ENCODE measurements at regions of chr18 and their contacts with region 1.

Region 1: DNA sequence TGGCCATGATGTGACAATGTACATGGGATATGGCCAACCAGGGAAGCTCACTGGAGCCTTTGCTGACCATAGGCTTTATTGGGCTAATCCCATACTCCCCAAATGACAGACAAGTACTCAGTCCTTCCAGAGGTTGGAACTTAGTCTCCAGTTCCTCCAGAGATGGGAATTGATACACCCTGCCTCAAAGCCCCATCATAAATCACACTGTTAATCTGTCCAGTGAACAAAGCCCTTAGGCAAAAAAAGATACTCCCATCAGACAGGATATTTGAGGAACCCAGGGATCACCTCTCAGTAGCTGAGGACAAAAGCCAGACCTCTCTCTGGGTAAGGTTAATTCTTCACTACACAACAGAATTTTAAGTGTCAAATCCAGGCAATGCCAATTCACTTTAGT is 247.5 kb upstream of the CDH20 start:
- DNase-seq: no peak
- ATAC-seq: no peak
- H3K4me3 ChIP-seq: no peak overlapping the region
- H3K27ac ChIP-seq: no peak overlapping the region
- H3K4me1 ChIP-seq: no peaks in the 10 kb centered on the region
- H3K27me3 ChIP-seq: no peaks in the 10 kb centered on the region
- CTCF ChIP-seq: no peak
- EP300 ChIP-seq: no peak
- POLR2A ChIP-seq: no peak
- RAD21 ChIP-seq: no peak

Region 2: GRCh38 chr18:59719544-59720181 is 1366.1 kb before region 1 on chr18:
- CTCF ChIA-PET with region 1: no interaction called
- POLR2A ChIA-PET with region 1: no interaction called
- in situ Hi-C with region 1: no loop called
- intact Hi-C with region 1: loop called (anchors 5 kb)
- DNase-seq: no peak
- ATAC-seq: no peak
- H3K4me3 ChIP-seq: no peak overlapping the region
- H3K27ac ChIP-seq: no peak overlapping the region
- H3K4me1 ChIP-seq: no peaks in the 10 kb centered on the region
- H3K27me3 ChIP-seq: peaks cover 0 to 7% of the 10 kb centered on the region in 2 experiments; a peak in 2 of 5 replicates
- CTCF ChIP-seq: no peak
- EP300 ChIP-seq: no peak
- POLR2A ChIP-seq: no peak
- RAD21 ChIP-seq: no peak

Region 3: DNA sequence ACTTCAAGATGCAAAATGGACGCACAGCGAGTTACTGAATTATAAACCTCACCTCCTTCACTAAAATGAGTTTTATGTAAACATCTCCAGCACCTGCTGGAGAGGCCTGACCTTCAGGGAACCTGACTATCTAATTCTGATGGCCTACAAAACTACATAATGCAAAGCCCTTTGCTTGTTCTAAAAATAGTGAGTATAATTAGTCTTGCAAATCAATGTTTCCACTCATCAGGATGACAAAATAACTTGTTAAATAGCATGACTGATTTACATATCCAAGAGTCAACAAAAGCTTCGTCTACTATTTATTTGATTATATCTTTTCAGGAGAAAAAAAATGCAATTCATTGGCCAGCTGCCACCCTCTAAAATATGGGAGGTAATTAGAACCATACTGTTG is 386.9 kb before region 1 on chr18:
- CTCF ChIA-PET with region 1: no interaction called
- POLR2A ChIA-PET with region 1: no interaction called
- in situ Hi-C with region 1: no loop called
- intact Hi-C with region 1: no loop called
- DNase-seq: no peak
- ATAC-seq: no peak
- H3K4me3 ChIP-seq: no peak overlapping the region
- H3K27ac ChIP-seq: no peak overlapping the region
- H3K4me1 ChIP-seq: no peaks in the 10 kb centered on the region
- H3K27me3 ChIP-seq: no peaks in the 10 kb centered on the region
- CTCF ChIP-seq: no peak
- EP300 ChIP-seq: no peak
- POLR2A ChIP-seq: no peak
- RAD21 ChIP-seq: no peak

Region 4: DNA sequence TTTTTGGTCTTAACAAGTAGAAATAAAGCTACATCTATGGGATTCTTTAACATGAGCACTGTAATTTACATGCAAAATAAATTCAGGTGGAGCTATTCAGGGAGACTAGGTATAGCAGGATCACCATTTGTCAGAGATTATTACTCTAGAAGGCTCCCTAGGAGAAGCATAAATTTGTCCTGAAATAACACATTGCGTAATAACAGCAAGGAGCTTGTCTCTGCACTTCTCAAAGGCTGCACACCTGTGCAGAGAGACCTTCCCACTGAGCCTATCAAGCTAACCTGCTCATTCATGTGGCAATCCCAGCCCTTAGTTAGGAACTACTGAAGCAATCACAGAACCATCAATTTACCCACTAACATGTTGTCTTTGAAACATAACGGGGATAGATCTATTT is 275.8 kb before region 1 on chr18:
- CTCF ChIA-PET with region 1: no interaction called
- POLR2A ChIA-PET with region 1: no interaction called
- in situ Hi-C with region 1: no loop called
- intact Hi-C with region 1: no loop called
- DNase-seq: no peak
- ATAC-seq: no peak
- H3K4me3 ChIP-seq: no peak overlapping the region
- H3K27ac ChIP-seq: no peak overlapping the region
- H3K4me1 ChIP-seq: no peaks in the 10 kb centered on the region
- H3K27me3 ChIP-seq: no peaks in the 10 kb centered on the region; a peak in 1 of 5 replicates
- CTCF ChIP-seq: no peak
- EP300 ChIP-seq: no peak
- POLR2A ChIP-seq: no peak
- RAD21 ChIP-seq: no peak

Region 5: DNA sequence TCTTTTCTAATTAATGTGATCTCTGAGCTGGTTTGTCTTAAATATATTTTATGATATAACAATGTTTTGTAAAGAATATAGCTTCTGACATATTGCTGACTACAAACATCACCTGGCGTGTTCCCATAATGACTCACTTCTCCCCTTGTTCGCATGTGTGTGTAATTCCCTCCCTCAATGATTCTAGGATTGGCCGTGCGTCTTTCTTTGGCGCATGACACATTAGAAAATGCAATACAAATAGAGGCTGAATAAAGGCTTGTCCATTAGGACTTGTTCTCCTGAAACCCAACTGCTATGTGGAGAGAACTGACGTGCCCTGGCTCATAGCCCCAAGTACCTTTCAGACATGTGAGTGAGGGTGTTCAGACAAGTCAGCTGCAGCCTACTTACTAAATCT is 87.8 kb after region 1 on chr18:
- CTCF ChIA-PET with region 1: no interaction called
- POLR2A ChIA-PET with region 1: no interaction called
- in situ Hi-C with region 1: no loop called
- intact Hi-C with region 1: no loop called
- DNase-seq: no peak
- ATAC-seq: no peak
- H3K4me3 ChIP-seq: no peak overlapping the region
- H3K27ac ChIP-seq: no peak overlapping the region
- H3K4me1 ChIP-seq: no peaks in the 10 kb centered on the region
- H3K27me3 ChIP-seq: no peaks in the 10 kb centered on the region
- CTCF ChIP-seq: no peak
- EP300 ChIP-seq: no peak
- POLR2A ChIP-seq: no peak
- RAD21 ChIP-seq: no peak

Region 6: DNA sequence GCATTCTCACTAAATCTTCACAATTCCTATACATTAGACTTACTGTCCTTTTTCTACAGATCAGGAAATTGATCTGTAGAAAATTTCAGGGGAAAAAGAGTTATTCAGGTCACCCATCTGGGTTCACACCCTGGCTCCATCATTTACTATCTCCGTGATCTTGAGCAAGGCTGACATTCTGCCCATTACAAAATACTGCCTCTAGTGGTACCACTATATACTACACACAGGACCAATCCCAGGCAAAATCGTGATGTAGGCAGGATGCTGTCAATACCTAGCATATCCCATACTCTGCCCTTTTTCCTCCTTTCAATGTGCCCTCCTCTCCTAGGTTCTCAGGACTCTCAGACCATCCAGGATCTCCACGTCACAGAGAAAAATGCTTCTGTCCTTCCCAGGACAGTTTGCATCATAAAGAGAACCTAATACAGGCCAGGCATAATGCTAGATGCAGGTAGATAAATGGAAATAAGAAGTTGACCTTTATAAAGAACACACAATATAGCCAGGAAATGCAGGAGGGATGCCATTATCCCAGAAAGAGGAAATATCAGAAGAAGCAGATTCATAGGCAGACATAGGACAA is 349.4 kb after region 1 on chr18:
- CTCF ChIA-PET with region 1: interaction called, 3 read pairs
- POLR2A ChIA-PET with region 1: no interaction called
- in situ Hi-C with region 1: no loop called
- intact Hi-C with region 1: loop called (anchors 5 kb)
- DNase-seq: peak; percentile 27
- ATAC-seq: peak; percentile 91
- H3K4me3 ChIP-seq: no peak overlapping the region
- H3K27ac ChIP-seq: no peak overlapping the region
- H3K4me1 ChIP-seq: no peaks in the 10 kb centered on the region
- H3K27me3 ChIP-seq: no peaks in the 10 kb centered on the region
- CTCF ChIP-seq: peak; percentile 52
- EP300 ChIP-seq: no peak
- POLR2A ChIP-seq: no peak
- RAD21 ChIP-seq: no peak